Body of pancreas (tissue), 4 donors: ENCODE measurements at regions of chrX and their contacts with region 1.

Region 1: DNA sequence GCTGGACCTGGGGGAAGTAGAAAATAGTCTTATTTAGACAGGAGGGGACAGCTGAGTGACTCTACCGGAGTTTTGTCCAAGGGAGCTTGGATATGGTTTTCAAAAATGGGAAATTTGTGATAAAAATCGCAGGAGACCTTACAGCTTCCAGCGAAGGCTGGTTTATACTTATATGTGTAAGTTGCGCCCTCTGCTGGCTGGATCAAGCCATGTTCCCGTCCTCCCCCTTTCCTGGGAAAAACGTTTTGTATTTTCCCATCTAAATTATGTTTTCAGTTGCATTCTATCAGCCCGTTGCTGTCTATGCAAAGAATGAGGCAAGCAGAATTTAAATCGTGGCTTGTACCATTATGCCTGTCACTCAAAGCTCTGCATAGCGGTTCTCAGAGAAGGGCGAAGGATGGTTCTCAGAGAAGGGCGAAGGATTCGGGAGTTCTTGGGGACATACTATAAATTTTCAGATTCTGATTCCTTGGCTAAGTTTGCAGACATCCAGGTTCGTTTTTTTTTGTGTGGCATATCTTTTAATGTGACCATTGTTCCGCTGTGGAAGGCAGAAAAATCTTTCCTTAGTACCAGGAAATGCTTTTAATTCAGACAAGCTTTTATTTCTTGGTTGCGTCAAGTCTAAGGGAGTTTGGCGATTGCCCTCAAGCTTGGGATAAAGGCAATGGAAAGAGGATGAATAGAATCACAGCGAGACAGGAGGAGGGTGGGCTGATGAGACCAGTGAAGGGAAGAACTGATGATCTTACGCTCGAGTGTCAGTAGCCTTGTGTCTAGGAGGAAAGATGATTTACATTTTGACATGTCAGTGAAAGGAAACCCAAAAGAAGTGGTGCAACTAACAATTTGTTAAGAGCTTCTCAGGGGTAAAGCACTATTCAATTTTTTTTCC is 128.5 kb upstream of the ARX start:
- DNase-seq: peak; percentile 47 to 80 (median 60)
- ATAC-seq: peak; percentile 35
- H3K4me3 ChIP-seq: no peak overlapping the region
- H3K27ac ChIP-seq: no peak overlapping the region
- H3K4me1 ChIP-seq: no peaks in the 10 kb centered on the region
- H3K27me3 ChIP-seq: no peaks in the 10 kb centered on the region
- CTCF ChIP-seq: peak; percentile 40 to 69 (median 50)
- POLR2A ChIP-seq: no peak

Region 2: GRCh38 chrX:24838629-24839028 is 305.7 kb before region 1 on chrX:
- intact Hi-C with region 1: loop called (anchors 5 kb)
- DNase-seq: peak in 1 of 4 donors; percentile 6
- ATAC-seq: no peak
- H3K4me3 ChIP-seq: no peak overlapping the region
- H3K27ac ChIP-seq: no peak overlapping the region
- H3K4me1 ChIP-seq: no peaks in the 10 kb centered on the region
- H3K27me3 ChIP-seq: no peaks in the 10 kb centered on the region
- CTCF ChIP-seq: peak in 6 of 7 experiments; percentile 22 to 59 (median 39)
- POLR2A ChIP-seq: no peak